Cardiac septum (tissue), 1 donor: ENCODE measurements at regions of chr6 and their contacts with region 1.

Region 1: GRCh38 chr6:20212392-20213217 is at the start of gene MBOAT1:
- DNase-seq: peak; percentile 95
- total RNA-seq, gene MBOAT1: 2.4 TPM

Region 2: DNA sequence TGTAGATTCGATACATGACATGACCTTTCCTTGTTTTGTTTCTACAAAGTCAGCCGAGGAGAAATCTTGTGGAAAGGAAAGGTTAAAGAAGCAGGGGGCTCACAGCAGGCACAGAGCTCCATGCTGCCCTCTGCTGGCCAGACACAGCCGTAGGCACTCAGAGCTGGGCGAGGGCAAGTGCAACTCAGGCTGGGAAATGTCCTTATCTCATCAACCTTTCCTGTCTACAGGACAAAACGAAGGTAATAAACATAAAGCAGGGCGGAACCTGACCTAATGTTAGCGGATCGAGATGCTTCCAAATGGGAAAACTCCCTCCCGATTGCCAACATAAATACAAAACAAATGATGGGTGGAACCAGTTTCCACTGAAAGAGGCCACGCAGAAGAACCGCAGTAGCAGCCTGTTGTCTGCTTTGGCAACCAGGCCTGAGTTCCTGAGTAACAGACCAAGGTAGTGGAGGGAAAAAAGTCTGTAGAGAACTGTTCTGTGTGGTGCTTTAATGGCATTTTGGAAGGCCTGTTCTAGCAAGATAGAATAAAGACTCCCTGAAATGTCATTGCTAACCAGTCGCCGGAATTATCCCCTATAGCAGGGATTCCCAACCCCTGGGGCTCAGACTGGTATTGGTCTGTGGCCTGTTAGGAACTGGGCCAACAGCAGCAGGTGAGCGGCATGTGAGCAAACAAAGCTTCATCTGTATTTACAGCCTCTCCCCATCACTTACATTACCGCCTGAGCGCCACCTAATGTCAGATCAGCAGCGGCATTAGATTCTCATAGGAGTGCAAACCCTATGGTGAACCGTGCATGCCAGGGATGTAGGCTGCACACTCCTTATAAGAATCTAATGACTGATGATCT is 85.6 kb before region 1 on chr6:
- intact Hi-C with region 1: loop called (anchors 5 kb)
- DNase-seq: peak; percentile 82

Region 3: DNA sequence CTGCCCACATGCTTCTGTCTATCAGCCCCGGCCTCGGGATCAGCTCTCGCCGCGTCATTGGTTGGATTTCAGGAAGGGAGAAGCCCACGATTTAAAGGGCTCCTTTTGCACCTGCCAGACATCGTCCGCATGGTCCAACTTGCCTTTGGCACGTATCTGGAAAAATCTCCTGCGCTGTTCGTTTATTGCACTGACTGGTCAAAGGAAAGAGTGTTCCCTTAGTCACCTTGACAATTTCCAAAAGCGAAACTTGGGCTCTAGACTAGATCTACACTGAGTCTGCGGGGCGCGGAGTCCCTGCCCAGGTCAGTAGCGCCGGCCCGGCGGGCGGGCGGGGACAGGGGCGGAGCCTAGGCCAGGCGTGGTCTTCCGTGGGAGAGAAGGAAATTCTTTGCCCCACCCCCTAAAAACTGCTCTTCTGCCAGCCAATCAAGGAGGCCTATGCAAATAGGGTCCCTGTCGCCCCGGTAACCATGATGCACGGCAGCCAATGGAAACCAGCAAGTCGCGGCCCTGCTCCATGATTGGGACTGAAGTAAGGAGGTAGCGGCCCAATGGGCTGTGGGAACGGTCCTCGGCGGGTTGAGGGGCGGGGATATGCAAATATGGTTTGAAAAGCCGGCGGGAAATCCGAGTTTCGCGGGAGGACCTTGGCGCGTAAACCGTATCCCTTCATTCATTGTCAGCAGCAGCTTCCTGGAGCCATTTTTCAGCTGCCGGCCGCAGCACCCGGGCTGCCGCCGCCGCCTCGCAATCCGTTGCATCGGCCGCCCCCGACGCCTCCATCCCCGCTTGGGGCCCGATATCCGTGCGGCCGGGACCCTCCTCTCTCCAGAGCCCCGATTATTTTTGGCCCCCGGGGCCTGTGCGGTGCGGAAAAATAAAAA is 188.8 kb after region 1 on chr6 and contains the start of gene E2F3:
- intact Hi-C with region 1: loop called (anchors 5 kb)
- DNase-seq: peak; percentile 100
- total RNA-seq, gene E2F3: 8.6 TPM